ENCODE measurements at regions of chr1 and their contacts with region 1.

Region 1: GRCh38 chr1:90964444-90965035 is 57.3 kb downstream of the ZNF644 start:
- DNase-seq: peak in 3 of 9 donors; percentile 4 to 28 (median 9)
- ATAC-seq: peak; percentile 55
- H3K4me3 ChIP-seq: no peak overlapping the region
- H3K4me3 Mint-ChIP-seq: no peak overlapping the region
- H3K27ac ChIP-seq: no peak overlapping the region
- H3K27ac Mint-ChIP-seq: peak overlapping the region in 2 of 9 donors; percentile 22 to 38
- H3K4me1 ChIP-seq: peaks cover 0 to 4% of the 10 kb centered on the region in 2 donors
- H3K4me1 Mint-ChIP-seq: peaks cover 9 to 71% (median 59%) of the 10 kb centered on the region in 7 donors
- H3K27me3 ChIP-seq: no peaks in the 10 kb centered on the region
- H3K27me3 Mint-ChIP-seq: no peaks in the 10 kb centered on the region

Region 2: DNA sequence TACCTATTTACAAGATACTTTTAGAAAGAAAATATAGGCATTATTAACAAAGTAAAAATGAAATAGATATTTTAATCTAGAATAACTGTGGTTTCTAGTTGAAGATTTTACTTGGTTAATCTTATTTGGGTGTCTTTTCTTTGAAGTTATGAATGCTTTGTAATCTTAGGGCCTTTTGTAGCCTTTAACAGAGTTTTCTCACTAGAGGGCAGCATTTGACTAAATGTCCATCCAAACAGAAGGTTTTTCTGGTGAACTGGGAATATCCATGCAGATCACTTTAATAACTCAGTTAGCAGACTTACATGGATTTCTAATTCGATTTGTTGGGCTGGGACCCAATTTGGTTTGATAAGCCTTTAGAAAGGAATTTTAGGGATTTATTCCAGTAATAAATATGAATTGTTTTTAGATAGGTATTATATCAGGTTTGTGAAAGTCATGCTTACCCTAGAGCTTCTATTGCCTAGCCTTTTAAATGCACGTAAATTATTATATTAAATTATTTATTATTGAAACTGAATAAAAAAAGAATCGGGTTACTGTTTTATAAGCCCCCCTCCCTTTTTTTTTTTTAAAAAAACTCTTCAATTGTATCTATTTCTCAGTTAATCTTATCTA is 849.9 kb before region 1 on chr1:
- CTCF ChIA-PET with region 1: no interaction called
- POLR2A ChIA-PET with region 1: no interaction called
- intact Hi-C with region 1: loop called in 1 of 2 experiments (anchors 10 kb)
- DNase-seq: peak in 3 of 9 donors; percentile 3 to 18 (median 3)
- ATAC-seq: no peak
- H3K4me3 ChIP-seq: no peak overlapping the region
- H3K4me3 Mint-ChIP-seq: no peak overlapping the region
- H3K27ac ChIP-seq: no peak overlapping the region
- H3K27ac Mint-ChIP-seq: no peak overlapping the region
- H3K4me1 ChIP-seq: no peaks in the 10 kb centered on the region
- H3K4me1 Mint-ChIP-seq: no peaks in the 10 kb centered on the region
- H3K27me3 ChIP-seq: peaks cover 0 to 4% of the 10 kb centered on the region in 2 donors
- H3K27me3 Mint-ChIP-seq: peaks cover 26 to 50% (median 31%) of the 10 kb centered on the region in 5 donors

Region 3: DNA sequence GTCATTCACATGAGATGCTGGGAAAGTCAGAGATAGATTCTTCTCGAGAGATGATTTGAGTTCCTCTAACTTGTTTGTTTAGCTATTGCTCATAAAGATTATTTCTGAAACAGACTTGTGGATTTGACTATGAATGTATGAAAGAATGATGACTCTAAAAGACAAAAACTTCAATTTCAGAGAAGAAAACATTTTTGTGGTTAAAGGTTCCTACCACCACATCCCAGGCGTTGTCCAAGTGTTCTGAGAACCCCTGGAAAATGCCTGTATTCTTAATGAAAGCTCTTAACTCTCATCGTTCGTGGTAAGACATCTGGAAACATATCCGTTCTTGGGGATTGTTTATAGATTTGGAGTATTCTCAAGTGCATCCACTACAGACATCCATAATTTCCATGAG is 476.1 kb before region 1 on chr1:
- CTCF ChIA-PET with region 1: no interaction called
- POLR2A ChIA-PET with region 1: no interaction called
- intact Hi-C with region 1: no loop called
- DNase-seq: no peak
- ATAC-seq: no peak
- H3K4me3 ChIP-seq: no peak overlapping the region
- H3K4me3 Mint-ChIP-seq: no peak overlapping the region
- H3K27ac ChIP-seq: no peak overlapping the region
- H3K27ac Mint-ChIP-seq: no peak overlapping the region
- H3K4me1 ChIP-seq: no peaks in the 10 kb centered on the region
- H3K4me1 Mint-ChIP-seq: no peaks in the 10 kb centered on the region
- H3K27me3 ChIP-seq: no peaks in the 10 kb centered on the region
- H3K27me3 Mint-ChIP-seq: peaks cover 0 to 6% (median 2%) of the 10 kb centered on the region in 5 donors

Region 4: GRCh38 chr1:90579212-90579802 is 385.2 kb before region 1 on chr1:
- CTCF ChIA-PET with region 1: interaction called, 5 read pairs
- POLR2A ChIA-PET with region 1: no interaction called
- intact Hi-C with region 1: loop called (anchors 1 to 2 kb)
- DNase-seq: peak in 6 of 9 donors; percentile 12 to 49 (median 34)
- ATAC-seq: no peak
- H3K4me3 ChIP-seq: no peak overlapping the region
- H3K4me3 Mint-ChIP-seq: no peak overlapping the region
- H3K27ac ChIP-seq: no peak overlapping the region
- H3K27ac Mint-ChIP-seq: no peak overlapping the region
- H3K4me1 ChIP-seq: no peaks in the 10 kb centered on the region
- H3K4me1 Mint-ChIP-seq: no peaks in the 10 kb centered on the region
- H3K27me3 ChIP-seq: no peaks in the 10 kb centered on the region
- H3K27me3 Mint-ChIP-seq: peaks cover 0 to 7% (median 4%) of the 10 kb centered on the region in 5 donors

Region 5: GRCh38 chr1:90721210-90722194 is 243.0 kb before region 1 on chr1:
- CTCF ChIA-PET with region 1: no interaction called
- POLR2A ChIA-PET with region 1: no interaction called
- intact Hi-C with region 1: loop called (anchors 1 kb)
- DNase-seq: peak in 1 of 9 donors; percentile 54
- ATAC-seq: peak; percentile 58
- H3K4me3 ChIP-seq: no peak overlapping the region
- H3K4me3 Mint-ChIP-seq: peak overlapping the region in 8 of 10 donors; percentile 1 to 53 (median 28)
- H3K27ac ChIP-seq: no peak overlapping the region
- H3K27ac Mint-ChIP-seq: peak overlapping the region in 4 of 9 donors; percentile 13 to 65 (median 40)
- H3K4me1 ChIP-seq: peaks cover 5 to 30% of the 10 kb centered on the region in 2 donors
- H3K4me1 Mint-ChIP-seq: peaks cover 23 to 76% (median 61%) of the 10 kb centered on the region in 7 donors
- H3K27me3 ChIP-seq: peaks cover 31 to 85% of the 10 kb centered on the region in 2 donors
- H3K27me3 Mint-ChIP-seq: peaks cover 84 to 91% (median 85%) of the 10 kb centered on the region in 5 donors

Region 6: GRCh38 chr1:90925928-90926869 is 38.3 kb before region 1 on chr1:
- CTCF ChIA-PET with region 1: no interaction called
- POLR2A ChIA-PET with region 1: no interaction called
- intact Hi-C with region 1: loop called in 1 of 2 experiments (anchors 5 kb)
- DNase-seq: no peak
- ATAC-seq: peak; percentile 54
- H3K4me3 ChIP-seq: no peak overlapping the region
- H3K4me3 Mint-ChIP-seq: peak overlapping the region in 9 of 10 donors; percentile 12 to 47 (median 21)
- H3K27ac ChIP-seq: no peak overlapping the region
- H3K27ac Mint-ChIP-seq: peak overlapping the region in 7 of 9 donors; percentile 3 to 52 (median 18)
- H3K4me1 ChIP-seq: peaks cover 11 to 23% of the 10 kb centered on the region in 2 donors
- H3K4me1 Mint-ChIP-seq: peaks cover 46 to 96% (median 90%) of the 10 kb centered on the region in 7 donors
- H3K27me3 ChIP-seq: no peaks in the 10 kb centered on the region
- H3K27me3 Mint-ChIP-seq: no peaks in the 10 kb centered on the region

Region 7: GRCh38 chr1:90946630-90947029 is 17.9 kb before region 1 on chr1:
- CTCF ChIA-PET with region 1: no interaction called
- POLR2A ChIA-PET with region 1: no interaction called
- intact Hi-C with region 1: loop called in 1 of 2 experiments (anchors 1 kb)
- DNase-seq: no peak
- ATAC-seq: no peak
- H3K4me3 ChIP-seq: no peak overlapping the region
- H3K4me3 Mint-ChIP-seq: peak overlapping the region in 1 of 10 donors; percentile 6
- H3K27ac ChIP-seq: no peak overlapping the region
- H3K27ac Mint-ChIP-seq: peak overlapping the region in 1 of 9 donors; percentile 53
- H3K4me1 ChIP-seq: peaks cover 0 to 10% of the 10 kb centered on the region in 2 donors
- H3K4me1 Mint-ChIP-seq: peaks cover 7 to 65% (median 43%) of the 10 kb centered on the region in 7 donors
- H3K27me3 ChIP-seq: no peaks in the 10 kb centered on the region
- H3K27me3 Mint-ChIP-seq: no peaks in the 10 kb centered on the region

Measured in naive thymus-derived CD4-positive, alpha-beta T cell (primary cell).